ENCODE measurements at regions of chr7 and their contacts with region 1.

Region 1: GRCh38 chr7:90931986-90932916 is 332.0 kb upstream of the FZD1 start:
- DNase-seq: peak; percentile 34
- H3K4me3 ChIP-seq: no peak overlapping the region
- H3K27ac ChIP-seq: peak overlapping the region in 1 of 4 donors; percentile 7
- H3K4me1 ChIP-seq: no peaks in the 10 kb centered on the region
- H3K27me3 ChIP-seq: no peaks in the 10 kb centered on the region
- CTCF ChIP-seq: no peak
- EP300 ChIP-seq: no peak
- POLR2A ChIP-seq: no peak

Region 2: GRCh38 chr7:90946730-90947501 is 14.7 kb after region 1 on chr7:
- in situ Hi-C with region 1: no loop called
- intact Hi-C with region 1: loop called (anchors 1 kb)
- DNase-seq: no peak
- H3K4me3 ChIP-seq: no peak overlapping the region
- H3K27ac ChIP-seq: no peak overlapping the region
- H3K4me1 ChIP-seq: peaks cover 0 to 10% (median 0%) of the 10 kb centered on the region in 4 donors
- H3K27me3 ChIP-seq: no peaks in the 10 kb centered on the region
- CTCF ChIP-seq: no peak
- EP300 ChIP-seq: no peak
- POLR2A ChIP-seq: no peak

Region 3: GRCh38 chr7:92255308-92255707 is 1323.1 kb after region 1 on chr7:
- in situ Hi-C with region 1: no loop called
- intact Hi-C with region 1: no loop called
- DNase-seq: no peak
- H3K4me3 ChIP-seq: no peak overlapping the region
- H3K27ac ChIP-seq: no peak overlapping the region
- H3K4me1 ChIP-seq: peaks cover 0 to 3% (median 0%) of the 10 kb centered on the region in 4 donors
- H3K27me3 ChIP-seq: no peaks in the 10 kb centered on the region
- CTCF ChIP-seq: no peak
- EP300 ChIP-seq: no peak
- POLR2A ChIP-seq: no peak

Measured in transverse colon (tissue), 4 donors.